Left colon (tissue), 2 donors: ENCODE measurements at regions of chr6 and their contacts with region 1.

Region 1: DNA sequence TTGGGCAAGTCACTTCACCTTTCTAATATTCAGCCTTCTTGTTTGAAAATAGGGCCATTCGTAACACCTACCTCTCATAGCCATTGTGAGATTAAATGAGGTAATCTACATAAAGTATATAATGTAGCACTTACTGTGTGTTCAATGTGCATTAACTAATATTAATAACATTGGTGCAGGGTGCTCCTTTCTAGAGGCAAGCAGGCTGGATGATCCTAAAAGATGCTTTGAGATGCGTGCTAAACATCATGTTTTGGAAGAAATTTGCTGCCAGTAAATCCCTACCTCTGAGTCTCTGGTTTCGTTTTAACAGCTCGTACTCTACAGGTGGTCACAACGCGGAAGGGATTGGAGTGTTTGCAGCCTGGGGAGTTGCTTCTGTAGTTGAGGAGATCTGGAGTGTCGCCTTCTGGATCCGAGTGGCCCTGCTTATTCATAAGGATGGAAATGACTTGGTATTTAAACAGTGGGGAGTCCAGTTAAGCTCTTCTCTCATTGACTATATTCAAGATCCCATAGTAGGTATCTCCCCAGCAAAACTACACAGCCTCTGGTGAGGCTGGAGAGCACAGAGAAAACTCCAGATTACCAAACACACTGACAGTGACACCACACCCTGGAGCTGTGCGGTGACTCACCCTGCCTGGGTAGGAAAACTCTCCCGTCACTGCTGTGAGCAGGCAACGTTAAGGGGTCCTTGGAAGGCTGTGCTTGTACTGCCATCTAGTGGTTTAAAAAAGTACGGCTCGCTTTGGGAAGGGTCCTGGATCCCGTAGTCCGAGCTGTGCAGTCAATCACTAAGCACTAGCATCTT is 107.9 kb downstream of the MAP3K7 start:
- DNase-seq: peak; percentile 78 to 87
- ATAC-seq: peak; percentile 95

Region 2: DNA sequence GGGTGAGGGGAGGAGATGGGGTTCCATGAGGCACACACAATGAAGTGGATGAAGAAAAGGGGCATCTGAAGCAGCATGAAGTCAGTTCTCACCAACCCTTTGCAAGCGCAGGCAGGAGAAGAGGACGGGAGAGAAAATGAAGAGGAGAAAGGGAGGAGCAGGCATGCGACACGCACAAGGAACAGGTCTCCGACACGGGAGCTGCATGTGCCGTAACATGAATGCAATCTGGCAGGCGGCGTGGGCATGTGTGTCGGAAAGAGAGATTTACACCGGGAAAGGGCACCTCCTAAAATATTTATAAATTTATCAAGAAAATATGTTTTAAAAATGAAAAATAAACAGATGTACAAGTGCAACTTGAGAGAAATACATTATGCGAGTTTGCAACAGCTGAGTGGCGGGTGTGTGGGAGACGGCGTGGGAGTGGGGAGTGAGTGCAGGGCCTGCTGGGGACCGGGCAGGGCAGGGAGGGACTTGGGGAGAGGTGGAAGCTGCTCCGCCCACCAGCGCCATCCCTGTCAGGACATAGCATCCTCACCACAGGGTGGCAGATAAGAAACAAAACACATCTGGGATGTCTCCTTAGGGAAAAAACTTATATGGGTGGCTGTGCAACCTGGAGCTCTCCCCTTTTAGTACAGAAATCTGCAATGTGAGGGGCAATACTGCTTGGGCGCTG is 544.2 kb before region 1 on chr6:
- intact Hi-C with region 1: loop called (anchors 5 to 10 kb)
- DNase-seq: no peak
- ATAC-seq: no peak

Region 3: GRCh38 chr6:89940225-89941027 is 538.6 kb before region 1 on chr6:
- intact Hi-C with region 1: loop called (anchors 5 to 10 kb)
- DNase-seq: peak; percentile 53 to 73
- ATAC-seq: peak; percentile 97

Region 4: DNA sequence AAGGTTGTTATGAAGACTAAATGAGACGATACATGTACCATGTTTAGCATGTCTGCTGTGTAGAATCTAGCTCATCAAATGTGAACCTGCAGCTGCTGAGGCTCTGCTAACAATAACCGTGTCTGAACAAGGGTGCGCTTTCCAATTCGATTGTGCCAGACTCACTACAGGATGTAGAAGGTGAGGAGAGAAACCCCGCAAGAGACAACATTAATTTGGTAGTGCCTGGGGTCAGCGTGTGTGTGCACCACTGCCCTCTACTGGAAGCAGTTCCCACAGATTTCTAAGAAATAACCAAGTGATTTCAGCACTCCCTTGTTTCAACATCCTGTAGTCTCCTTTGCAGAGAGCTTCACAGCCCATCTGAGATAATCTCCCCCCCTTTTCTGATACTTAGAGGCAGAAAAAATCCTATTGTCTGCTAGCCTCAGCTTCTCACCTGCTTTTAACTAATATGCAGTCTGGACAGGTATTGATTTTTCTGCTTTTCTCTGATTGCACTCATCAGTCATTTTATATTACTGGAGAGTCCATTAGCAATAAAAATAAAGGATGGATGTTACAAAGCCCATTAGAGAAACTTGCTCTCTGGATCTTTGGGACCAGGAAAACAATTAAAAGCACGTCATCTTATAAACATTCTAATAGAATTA is 85.6 kb before region 1 on chr6:
- intact Hi-C with region 1: loop called in 1 of 2 experiments (anchors 5 kb)
- DNase-seq: peak in 1 of 2 donors; percentile 66
- ATAC-seq: peak; percentile 58

Region 5: DNA sequence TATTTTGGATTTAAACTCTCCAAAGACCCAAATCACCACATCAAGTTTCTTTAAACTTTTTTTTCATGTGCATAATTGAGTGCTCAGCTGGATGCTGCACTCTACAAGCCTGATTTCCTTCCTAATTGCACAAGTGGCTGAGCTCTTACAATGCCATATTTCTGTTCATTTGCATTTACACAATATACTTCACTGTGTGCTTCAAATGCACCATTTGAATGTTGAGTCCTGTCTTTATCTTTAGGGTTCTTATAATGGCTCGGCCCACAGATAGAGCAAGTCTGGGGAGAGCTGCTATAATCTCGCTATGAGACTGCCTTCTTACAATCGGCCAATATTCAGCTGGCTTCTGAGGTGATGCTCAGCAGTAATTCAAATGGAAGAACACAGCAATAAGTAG is 308.4 kb after region 1 on chr6:
- intact Hi-C with region 1: no loop called
- DNase-seq: no peak
- ATAC-seq: no peak